Prostate gland (tissue), 2 donors: ENCODE measurements at regions of chr2 and their contacts with region 1.

Region 1: GRCh38 chr2:237060534-237061312 is 25.0 kb upstream of the COPS8 start:
- DNase-seq: peak; percentile 46
- H3K4me3 ChIP-seq: no peak overlapping the region
- H3K27ac ChIP-seq: no peak overlapping the region
- H3K4me1 ChIP-seq: no peaks in the 10 kb centered on the region
- H3K27me3 ChIP-seq: no peaks in the 10 kb centered on the region
- CTCF ChIP-seq: peak in 3 of 4 experiments; percentile 62 to 78 (median 72)
- POLR2A ChIP-seq: no peak

Region 2: DNA sequence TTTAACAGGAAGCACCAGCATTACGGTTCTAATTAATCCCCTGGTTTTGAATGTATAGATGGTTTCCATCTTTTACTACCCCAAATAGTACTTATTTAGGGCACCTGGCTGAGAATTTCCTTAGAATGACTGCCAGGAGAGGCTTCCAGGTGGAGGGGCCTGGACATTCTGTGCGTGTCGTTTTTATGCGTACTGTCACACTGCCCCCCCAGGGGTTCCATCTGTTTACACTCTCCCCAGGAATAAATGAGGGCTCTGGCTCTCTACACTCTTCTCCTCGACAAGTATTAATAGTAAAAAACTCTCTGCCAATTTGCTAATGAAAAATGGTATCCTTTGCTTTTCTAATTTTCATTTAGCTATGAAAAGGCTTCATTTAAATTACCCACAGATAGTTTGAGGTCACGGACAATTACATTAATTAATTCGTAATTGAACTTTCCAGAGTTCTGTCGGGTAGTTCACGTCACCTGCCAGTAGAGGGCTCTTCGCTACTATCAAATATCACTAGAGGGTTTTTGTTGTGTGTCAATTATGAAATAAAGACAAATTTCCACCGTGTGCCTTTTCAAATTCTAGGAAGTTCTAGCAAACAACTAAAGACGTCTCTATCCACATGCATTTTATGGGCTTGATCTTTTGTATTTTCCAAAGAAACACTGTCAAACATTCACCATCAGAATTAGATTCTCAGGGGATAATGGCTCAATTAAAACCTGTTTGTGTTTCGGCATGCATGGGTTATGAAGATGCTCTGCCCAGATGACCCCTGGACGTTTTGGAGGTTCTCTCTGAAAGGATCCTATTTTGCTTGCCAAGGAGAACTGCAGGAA is 707.7 kb before region 1 on chr2:
- intact Hi-C with region 1: loop called (anchors 2 kb)
- DNase-seq: no peak
- H3K4me3 ChIP-seq: no peak overlapping the region
- H3K27ac ChIP-seq: no peak overlapping the region
- H3K4me1 ChIP-seq: no peaks in the 10 kb centered on the region
- H3K27me3 ChIP-seq: no peaks in the 10 kb centered on the region
- CTCF ChIP-seq: peak; percentile 71 to 81 (median 78)
- POLR2A ChIP-seq: no peak

Region 3: GRCh38 chr2:236512902-236513435 is 547.8 kb before region 1 on chr2:
- intact Hi-C with region 1: loop called (anchors 5 kb)
- DNase-seq: peak; percentile 51
- H3K4me3 ChIP-seq: no peak overlapping the region
- H3K27ac ChIP-seq: no peak overlapping the region
- H3K4me1 ChIP-seq: no peaks in the 10 kb centered on the region
- H3K27me3 ChIP-seq: no peaks in the 10 kb centered on the region
- CTCF ChIP-seq: peak; percentile 51 to 88 (median 82)
- POLR2A ChIP-seq: no peak

Region 4: DNA sequence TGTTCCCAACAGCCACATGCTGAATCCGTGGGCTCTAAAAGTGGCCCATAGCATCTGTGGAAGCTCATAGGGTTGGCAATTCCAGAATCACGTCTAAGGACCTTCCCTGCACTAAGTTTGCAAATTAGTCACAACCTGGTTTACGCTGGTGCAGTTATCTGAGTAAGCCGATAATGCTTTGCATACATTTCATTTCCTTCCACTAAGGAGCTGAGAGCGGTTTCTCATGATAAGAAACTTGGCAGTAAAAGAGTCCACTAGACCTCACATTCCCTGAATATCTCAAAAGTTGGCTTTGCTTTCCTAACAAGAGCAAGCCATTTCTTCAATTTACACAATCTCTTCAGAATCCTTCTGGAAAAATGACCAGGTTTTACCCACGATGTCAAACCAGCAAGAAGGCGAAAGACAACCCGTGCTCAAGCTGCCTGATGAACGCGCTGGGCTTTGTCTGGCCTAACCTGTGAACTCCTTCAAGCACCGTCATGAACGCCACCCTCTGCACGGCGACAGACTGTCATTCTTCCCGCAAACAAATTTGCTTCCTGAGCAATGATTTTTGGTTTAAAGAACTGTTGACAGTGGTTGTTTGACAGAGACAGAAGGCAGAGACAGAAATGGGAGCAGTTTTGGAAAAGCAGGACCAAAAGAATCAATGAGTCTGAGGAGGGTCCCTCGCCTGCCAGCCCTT is 48.0 kb before region 1 on chr2:
- intact Hi-C with region 1: no loop called
- DNase-seq: no peak
- H3K4me3 ChIP-seq: no peak overlapping the region
- H3K27ac ChIP-seq: no peak overlapping the region
- H3K4me1 ChIP-seq: no peaks in the 10 kb centered on the region
- H3K27me3 ChIP-seq: no peaks in the 10 kb centered on the region
- CTCF ChIP-seq: no peak
- POLR2A ChIP-seq: no peak